K562 (cell line): ENCODE measurements at regions of chr3 and their contacts with region 1.

Region 1: GRCh38 chr3:185912929-185913901 is 24.6 kb downstream of the TRA2B start:
- DNase-seq: no peak
- ATAC-seq: peak; percentile 47
- H3K4me3 ChIP-seq: no peak overlapping the region
- H3K27ac ChIP-seq: no peak overlapping the region
- H3K4me1 ChIP-seq: no peaks in the 10 kb centered on the region
- H3K27me3 ChIP-seq: no peaks in the 10 kb centered on the region
- CTCF ChIP-seq: no peak
- EP300 ChIP-seq: no peak
- POLR2A ChIP-seq: peak; percentile 73
- RAD21 ChIP-seq: no peak

Region 2: GRCh38 chr3:185659942-185660921 is 253.0 kb before region 1 on chr3:
- CTCF ChIA-PET with region 1: no interaction called
- POLR2A ChIA-PET with region 1: interaction called, 24 read pairs
- in situ Hi-C with region 1: no loop called
- intact Hi-C with region 1: loop called (anchors 10 kb)
- DNase-seq: peak; percentile 80 to 89 (median 82)
- ATAC-seq: peak; percentile 95
- H3K4me3 ChIP-seq: no peak overlapping the region
- H3K27ac ChIP-seq: no peak overlapping the region; the same call in 2 of the 3 replicates
- H3K4me1 ChIP-seq: peaks cover 2 to 7% of the 10 kb centered on the region in 2 experiments; a peak in 4 of 5 replicates
- H3K27me3 ChIP-seq: no peaks in the 10 kb centered on the region
- CTCF ChIP-seq: peak; percentile 94 to 98 (median 95)
- EP300 ChIP-seq: no peak
- POLR2A ChIP-seq: no peak
- RAD21 ChIP-seq: peak; percentile 86 to 89

Region 3: DNA sequence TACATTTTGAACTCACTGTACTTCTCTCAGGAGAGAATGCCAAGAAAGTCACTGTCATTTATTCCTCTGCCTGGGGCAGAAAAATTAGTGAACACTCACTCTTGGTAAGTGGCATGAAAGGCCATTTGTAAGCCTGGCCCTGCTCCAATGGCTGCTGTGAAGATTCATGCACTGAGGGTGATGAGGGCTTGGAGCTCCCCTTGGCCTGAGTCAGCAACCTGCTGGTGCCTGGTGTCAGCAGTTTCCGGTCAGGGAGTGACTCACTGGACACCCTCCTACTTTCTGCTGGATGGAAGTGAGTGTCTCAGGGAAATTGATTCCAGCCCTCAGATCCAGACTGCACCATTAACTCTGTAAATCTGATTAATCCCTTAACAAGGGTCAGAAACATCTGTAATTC is 13.0 kb before region 1 on chr3:
- CTCF ChIA-PET with region 1: no interaction called
- POLR2A ChIA-PET with region 1: interaction called, 23 read pairs
- in situ Hi-C with region 1: no loop called
- intact Hi-C with region 1: no loop called
- DNase-seq: peak; percentile 47 to 90 (median 69)
- ATAC-seq: peak; percentile 99
- H3K4me3 ChIP-seq: no peak overlapping the region
- H3K27ac ChIP-seq: peak overlapping the region; percentile 53; the same call in 1 of the 3 replicates
- H3K4me1 ChIP-seq: peaks cover 4 to 5% of the 10 kb centered on the region in 2 experiments; a peak in 3 of 5 replicates
- H3K27me3 ChIP-seq: no peaks in the 10 kb centered on the region
- CTCF ChIP-seq: no peak
- EP300 ChIP-seq: peak; percentile 55; the same call in 1 of the 2 replicates
- POLR2A ChIP-seq: no peak
- RAD21 ChIP-seq: 0 out of 4 replicates have a peak, but pooled peaks of 1 of the 2 experiments have one; percentile 4

Region 4: GRCh38 chr3:185924375-185924774 is 11.2 kb after region 1 on chr3:
- CTCF ChIA-PET with region 1: no interaction called
- POLR2A ChIA-PET with region 1: interaction called, 55 read pairs
- in situ Hi-C with region 1: no loop called
- intact Hi-C with region 1: no loop called
- DNase-seq: no peak
- ATAC-seq: no peak
- H3K4me3 ChIP-seq: no peak overlapping the region
- H3K27ac ChIP-seq: no peak overlapping the region
- H3K4me1 ChIP-seq: peaks cover 0 to 14% of the 10 kb centered on the region in 2 experiments; a peak in 2 of 5 replicates
- H3K27me3 ChIP-seq: no peaks in the 10 kb centered on the region
- CTCF ChIP-seq: no peak
- EP300 ChIP-seq: no peak
- POLR2A ChIP-seq: no peak
- RAD21 ChIP-seq: no peak

Region 5: DNA sequence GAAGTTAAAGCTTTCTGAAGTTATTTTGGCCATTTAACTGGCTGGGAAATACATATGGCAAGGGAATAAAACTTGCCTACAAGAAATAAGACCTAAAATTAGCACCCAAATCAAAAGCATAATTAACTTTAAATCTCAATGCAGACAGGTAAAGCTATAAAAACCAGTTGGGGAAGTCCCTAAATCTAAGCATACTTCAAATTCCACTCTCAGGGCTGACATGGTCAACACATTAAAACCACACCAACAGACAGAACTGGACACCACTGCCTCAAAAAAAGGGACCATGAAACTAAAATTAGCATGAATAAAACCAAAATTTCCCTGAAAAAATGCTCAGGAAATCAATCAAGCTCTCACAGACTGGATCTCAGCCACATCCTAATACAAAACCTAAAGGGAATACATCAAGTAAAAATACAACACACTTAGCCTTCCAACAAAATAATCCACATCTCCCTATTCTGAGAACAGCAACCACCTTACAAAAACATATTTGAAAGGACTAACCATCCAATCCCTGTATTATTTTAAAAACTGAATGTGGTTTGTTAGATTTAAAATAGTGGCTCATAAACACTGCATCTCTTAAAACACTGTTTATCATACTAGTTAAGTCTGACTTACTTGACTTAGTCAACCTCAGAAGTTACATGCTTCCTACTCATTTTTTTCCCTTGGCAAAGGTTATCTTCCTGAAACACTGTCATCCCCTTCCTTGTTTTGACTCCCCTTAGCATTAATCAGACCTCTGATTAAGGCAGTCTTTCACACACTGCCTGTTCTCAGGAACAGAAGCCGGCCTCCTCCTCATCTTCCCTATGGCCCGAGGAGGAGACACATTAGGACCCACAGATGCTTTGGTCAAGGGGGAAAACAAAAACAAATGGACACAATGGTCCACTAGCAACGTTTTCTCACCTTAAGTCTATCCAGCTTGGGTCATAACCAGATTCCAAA is 16.3 kb after region 1 on chr3:
- CTCF ChIA-PET with region 1: no interaction called
- POLR2A ChIA-PET with region 1: interaction called, 64 read pairs
- in situ Hi-C with region 1: no loop called
- intact Hi-C with region 1: no loop called
- DNase-seq: peak in 2 of 4 experiments; percentile 44 to 55
- ATAC-seq: peak; percentile 36
- H3K4me3 ChIP-seq: no peak overlapping the region
- H3K27ac ChIP-seq: no peak overlapping the region
- H3K4me1 ChIP-seq: peaks cover 3 to 51% of the 10 kb centered on the region in 2 experiments; a peak in 4 of 5 replicates
- H3K27me3 ChIP-seq: no peaks in the 10 kb centered on the region
- CTCF ChIP-seq: no peak
- EP300 ChIP-seq: no peak
- POLR2A ChIP-seq: 0 out of 2 replicates have a peak, but pooled peaks have one; percentile 24
- RAD21 ChIP-seq: no peak

Region 6: DNA sequence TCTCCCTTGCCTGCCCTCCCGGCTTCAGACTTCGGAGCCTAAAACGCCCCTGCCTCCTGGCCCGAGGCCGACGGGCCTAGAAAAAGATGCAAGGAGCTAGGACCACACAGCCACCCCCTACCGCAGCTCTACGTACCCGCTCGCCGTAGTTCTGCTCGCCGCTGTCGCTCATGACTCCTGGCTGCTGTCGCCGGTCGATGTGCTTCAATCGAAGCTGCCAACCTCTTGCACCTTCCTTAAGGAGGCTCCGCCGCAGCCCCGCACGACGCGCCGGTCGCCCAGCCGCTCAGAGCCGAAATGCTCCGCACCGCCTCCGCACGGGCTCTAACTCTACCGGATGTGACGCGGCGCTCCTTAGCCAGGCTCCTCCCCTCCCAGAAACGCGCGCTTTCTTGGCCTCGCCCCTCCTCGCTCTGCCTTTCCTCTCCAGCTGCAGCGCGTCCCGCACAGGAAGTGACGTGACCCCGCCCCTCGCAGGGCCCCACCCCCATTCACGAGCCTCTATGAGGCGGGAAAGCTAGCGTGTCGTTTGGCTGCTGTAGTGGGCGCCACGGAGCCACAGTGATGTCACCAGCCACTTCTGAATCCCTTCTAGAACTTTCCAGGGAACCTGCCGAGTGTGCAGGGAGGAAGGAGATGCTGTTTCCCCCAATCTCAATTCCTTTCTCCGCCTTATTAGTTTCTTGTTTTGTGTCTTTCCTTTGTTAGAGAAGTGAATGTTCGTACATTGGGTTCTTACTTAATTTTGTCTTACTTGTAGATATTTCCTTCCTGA is 24.7 kb after region 1 on chr3 and contains the start of gene TRA2B:
- CTCF ChIA-PET with region 1: no interaction called
- POLR2A ChIA-PET with region 1: interaction called, 64 read pairs
- in situ Hi-C with region 1: no loop called
- intact Hi-C with region 1: no loop called
- DNase-seq: peak; percentile 95 to 99 (median 96)
- ATAC-seq: peak; percentile 87
- H3K4me3 ChIP-seq: peak within 1 kb of the TSS; percentile 99
- H3K27ac ChIP-seq: peak within 1 kb of the TSS; percentile 100
- H3K4me1 ChIP-seq: peaks cover 0 to 10% of the 10 kb centered on the region in 2 experiments; a peak in 2 of 5 replicates
- H3K27me3 ChIP-seq: no peaks in the 10 kb centered on the region
- CTCF ChIP-seq: peak; percentile 30 to 44 (median 43); a peak in 3 of 6 replicates
- EP300 ChIP-seq: peak; percentile 35
- POLR2A ChIP-seq: peak; percentile 100
- RAD21 ChIP-seq: no peak
- polyA plus RNA-seq, gene TRA2B: 105 to 132 TPM

Region 7: DNA sequence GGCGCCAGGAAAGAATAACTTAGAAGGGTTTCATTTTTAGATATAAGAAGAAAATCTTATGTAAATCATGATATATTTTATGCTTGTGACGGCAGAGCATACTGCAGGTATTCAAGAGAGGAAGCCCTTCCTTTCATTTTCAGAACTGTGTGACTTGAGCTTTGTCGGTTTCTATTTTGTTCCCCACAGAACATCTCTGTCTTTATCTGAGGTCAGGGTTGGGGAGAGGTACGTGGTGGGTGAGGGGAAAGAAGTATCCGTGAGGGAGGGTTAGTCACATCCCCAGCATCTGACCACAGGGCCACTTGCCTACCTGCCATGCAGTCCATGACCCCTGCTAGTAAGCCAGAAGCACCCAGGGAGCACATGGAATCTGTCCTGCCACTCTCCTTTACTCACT is 322.3 kb after region 1 on chr3:
- CTCF ChIA-PET with region 1: no interaction called
- POLR2A ChIA-PET with region 1: no interaction called
- in situ Hi-C with region 1: no loop called
- intact Hi-C with region 1: no loop called
- DNase-seq: no peak
- ATAC-seq: no peak
- H3K4me3 ChIP-seq: no peak overlapping the region
- H3K27ac ChIP-seq: no peak overlapping the region
- H3K4me1 ChIP-seq: no peaks in the 10 kb centered on the region
- H3K27me3 ChIP-seq: peaks cover 11 to 43% of the 10 kb centered on the region in 2 experiments; a peak in 4 of 5 replicates
- CTCF ChIP-seq: no peak
- EP300 ChIP-seq: no peak
- POLR2A ChIP-seq: no peak
- RAD21 ChIP-seq: no peak

Region 8: DNA sequence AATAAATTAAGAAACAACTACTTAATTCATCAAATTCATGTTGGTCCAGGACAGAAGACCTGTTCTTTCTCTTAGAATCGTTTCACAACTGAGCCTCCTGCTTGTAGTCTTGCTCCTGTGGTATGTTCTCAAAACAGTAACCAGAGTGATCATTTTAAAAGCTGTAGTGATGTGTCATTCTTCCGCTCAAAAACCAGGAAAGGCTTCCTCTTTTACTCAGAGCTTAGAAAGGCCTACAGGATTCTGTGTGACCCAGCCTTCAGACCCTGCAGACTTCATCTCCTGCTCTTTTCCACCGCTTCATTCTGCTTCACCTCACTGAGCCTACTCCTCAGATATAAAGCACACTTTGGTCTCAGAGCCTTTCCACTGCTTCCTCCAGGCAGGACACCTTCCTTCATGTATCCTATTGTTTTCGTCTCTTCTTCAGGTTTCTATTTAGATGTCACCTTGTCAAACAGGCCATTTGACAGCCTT is 1039.8 kb after region 1 on chr3:
- CTCF ChIA-PET with region 1: no interaction called
- POLR2A ChIA-PET with region 1: no interaction called
- in situ Hi-C with region 1: no loop called
- intact Hi-C with region 1: no loop called
- DNase-seq: peak in 2 of 4 experiments; percentile 52 to 72
- ATAC-seq: peak; percentile 42
- H3K4me3 ChIP-seq: no peak overlapping the region
- H3K27ac ChIP-seq: peak overlapping the region; percentile 75
- H3K4me1 ChIP-seq: peaks cover 49 to 59% of the 10 kb centered on the region in 2 experiments
- H3K27me3 ChIP-seq: no peaks in the 10 kb centered on the region
- CTCF ChIP-seq: no peak
- EP300 ChIP-seq: peak; percentile 35; the same call in 1 of the 2 replicates
- POLR2A ChIP-seq: no peak; the same call in 1 of the 2 replicates
- RAD21 ChIP-seq: peak in 1 of 2 experiments; percentile 33; a peak in 2 of 4 replicates